ENCODE measurements at regions of chr16 and their contacts with region 1.

Region 1: DNA sequence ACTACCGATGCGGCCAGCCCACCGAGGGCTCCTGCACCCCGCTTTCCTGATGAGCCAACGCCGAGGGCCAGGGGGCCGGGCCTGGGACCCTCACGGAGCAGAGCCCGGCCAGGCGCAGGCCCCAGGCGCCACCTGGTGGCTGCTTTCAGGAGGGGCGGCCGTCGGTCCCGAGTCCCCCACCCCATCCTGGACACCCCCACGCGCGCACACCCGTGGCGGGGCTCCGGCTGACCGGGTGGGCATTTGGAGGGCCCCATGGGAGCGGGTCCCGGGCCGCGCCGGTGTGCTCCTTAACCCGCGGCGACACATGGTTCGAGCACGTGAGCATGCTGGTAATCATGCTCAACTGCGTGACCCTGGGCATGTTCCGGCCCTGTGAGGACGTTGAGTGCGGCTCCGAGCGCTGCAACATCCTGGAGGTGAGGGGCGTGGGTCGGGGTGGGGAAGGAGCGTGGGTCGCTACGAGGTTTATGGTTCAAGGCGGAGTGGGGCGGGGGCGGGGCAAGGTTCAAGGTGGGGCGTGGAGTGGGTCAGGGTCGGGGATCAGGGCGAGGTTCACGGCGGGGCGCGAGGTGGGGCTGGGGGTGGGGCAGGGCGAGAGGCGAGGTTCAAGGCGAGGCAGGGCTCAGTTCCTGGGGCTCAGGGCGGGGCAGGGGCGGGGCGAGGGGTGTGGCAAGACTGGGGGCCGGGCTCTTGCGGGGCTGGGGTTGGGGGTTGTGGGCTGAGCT is 30.2 kb downstream of the TPSG1 start:
- DNase-seq: peak; percentile 29 to 75 (median 69)
- ATAC-seq: peak; percentile 77
- H3K4me3 ChIP-seq: no peak overlapping the region
- H3K27ac ChIP-seq: no peak overlapping the region
- H3K4me1 ChIP-seq: peaks cover 0 to 64% of the 10 kb centered on the region in 2 experiments; a peak in 3 of 5 replicates
- H3K27me3 ChIP-seq: peaks cover 0 to 17% of the 10 kb centered on the region in 2 experiments; a peak in 2 of 5 replicates
- CTCF ChIP-seq: peak; percentile 62 to 80 (median 79)
- EP300 ChIP-seq: no peak
- POLR2A ChIP-seq: no peak
- RAD21 ChIP-seq: peak; percentile 72 to 90

Region 2: DNA sequence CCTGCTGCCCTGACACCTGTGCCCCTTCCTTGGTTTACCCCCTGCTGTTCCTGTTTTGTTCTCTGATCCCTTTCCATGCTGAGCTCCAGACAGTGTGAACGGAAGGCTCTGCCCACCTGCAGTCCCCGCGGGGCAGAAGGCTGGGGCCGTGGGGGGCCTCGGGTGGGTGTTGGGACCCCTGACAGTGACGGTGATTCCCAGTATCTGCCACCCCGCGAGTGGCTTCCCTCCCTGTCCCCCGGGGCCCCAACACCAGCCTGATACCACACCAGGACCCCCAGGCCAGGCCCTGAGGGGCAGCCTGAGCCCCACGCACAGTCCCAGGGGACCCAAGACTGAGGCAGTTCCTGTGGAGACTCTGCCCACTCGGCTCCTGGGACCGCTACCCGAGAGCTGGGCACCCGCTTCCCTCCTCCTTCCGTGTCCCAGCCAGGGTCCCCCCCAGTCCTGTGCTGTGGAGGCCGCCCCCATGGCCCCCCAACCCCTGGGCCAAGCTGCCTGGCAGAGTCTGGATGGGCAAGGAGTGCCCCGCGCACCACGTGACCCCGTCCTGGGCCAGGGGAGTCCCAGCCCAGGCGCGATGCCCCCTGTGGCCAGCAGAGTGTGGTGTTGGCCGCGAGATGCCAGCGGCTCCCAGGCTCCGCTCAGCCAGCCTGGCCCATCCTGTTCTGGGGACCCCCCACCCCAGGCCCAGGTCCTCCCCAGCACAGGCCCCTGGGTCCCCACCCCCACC is 88.8 kb before region 1 on chr16:
- CTCF ChIA-PET with region 1: interaction called, 38 read pairs
- POLR2A ChIA-PET with region 1: no interaction called
- in situ Hi-C with region 1: loop called (anchors 5 kb)
- intact Hi-C with region 1: loop called (anchors 2 kb)
- DNase-seq: peak; percentile 59 to 83 (median 81)
- ATAC-seq: peak; percentile 78
- H3K4me3 ChIP-seq: no peak overlapping the region
- H3K27ac ChIP-seq: no peak overlapping the region
- H3K4me1 ChIP-seq: peaks cover 0 to 68% of the 10 kb centered on the region in 2 experiments; a peak in 2 of 5 replicates
- H3K27me3 ChIP-seq: peaks cover 25 to 63% of the 10 kb centered on the region in 2 experiments
- CTCF ChIP-seq: peak; percentile 58 to 82 (median 81)
- EP300 ChIP-seq: no peak
- POLR2A ChIP-seq: no peak
- RAD21 ChIP-seq: peak; percentile 58 to 80

Region 3: GRCh38 chr16:1113889-1114526 is 80.8 kb before region 1 on chr16:
- CTCF ChIA-PET with region 1: interaction called, 38 read pairs
- POLR2A ChIA-PET with region 1: no interaction called
- in situ Hi-C with region 1: loop called (anchors 5 kb)
- intact Hi-C with region 1: no loop called
- DNase-seq: peak in 1 of 4 experiments; percentile 18
- ATAC-seq: peak; percentile 33; the same call in 1 of the 3 replicates
- H3K4me3 ChIP-seq: no peak overlapping the region
- H3K27ac ChIP-seq: no peak overlapping the region
- H3K4me1 ChIP-seq: peaks cover 0 to 56% of the 10 kb centered on the region in 2 experiments; a peak in 2 of 5 replicates
- H3K27me3 ChIP-seq: peaks cover 27 to 59% of the 10 kb centered on the region in 2 experiments; a peak in 4 of 5 replicates
- CTCF ChIP-seq: 0 out of 6 replicates have a peak, but pooled peaks of 1 of the 3 experiments have one; percentile 8
- EP300 ChIP-seq: no peak
- POLR2A ChIP-seq: no peak
- RAD21 ChIP-seq: no peak

Measured in K562 (cell line).